ENCODE measurements at regions of chr6 and their contacts with region 1.

Region 1: GRCh38 chr6:159931112-159931511 is 37.8 kb upstream of the IGF2R start:
- DNase-seq: peak; percentile 69
- H3K4me3 Mint-ChIP-seq: no peak overlapping the region
- H3K27ac Mint-ChIP-seq: peak overlapping the region; percentile 92
- H3K4me1 Mint-ChIP-seq: peaks cover 37% of the 10 kb centered on the region
- H3K27me3 Mint-ChIP-seq: peaks cover 2% of the 10 kb centered on the region

Region 2: DNA sequence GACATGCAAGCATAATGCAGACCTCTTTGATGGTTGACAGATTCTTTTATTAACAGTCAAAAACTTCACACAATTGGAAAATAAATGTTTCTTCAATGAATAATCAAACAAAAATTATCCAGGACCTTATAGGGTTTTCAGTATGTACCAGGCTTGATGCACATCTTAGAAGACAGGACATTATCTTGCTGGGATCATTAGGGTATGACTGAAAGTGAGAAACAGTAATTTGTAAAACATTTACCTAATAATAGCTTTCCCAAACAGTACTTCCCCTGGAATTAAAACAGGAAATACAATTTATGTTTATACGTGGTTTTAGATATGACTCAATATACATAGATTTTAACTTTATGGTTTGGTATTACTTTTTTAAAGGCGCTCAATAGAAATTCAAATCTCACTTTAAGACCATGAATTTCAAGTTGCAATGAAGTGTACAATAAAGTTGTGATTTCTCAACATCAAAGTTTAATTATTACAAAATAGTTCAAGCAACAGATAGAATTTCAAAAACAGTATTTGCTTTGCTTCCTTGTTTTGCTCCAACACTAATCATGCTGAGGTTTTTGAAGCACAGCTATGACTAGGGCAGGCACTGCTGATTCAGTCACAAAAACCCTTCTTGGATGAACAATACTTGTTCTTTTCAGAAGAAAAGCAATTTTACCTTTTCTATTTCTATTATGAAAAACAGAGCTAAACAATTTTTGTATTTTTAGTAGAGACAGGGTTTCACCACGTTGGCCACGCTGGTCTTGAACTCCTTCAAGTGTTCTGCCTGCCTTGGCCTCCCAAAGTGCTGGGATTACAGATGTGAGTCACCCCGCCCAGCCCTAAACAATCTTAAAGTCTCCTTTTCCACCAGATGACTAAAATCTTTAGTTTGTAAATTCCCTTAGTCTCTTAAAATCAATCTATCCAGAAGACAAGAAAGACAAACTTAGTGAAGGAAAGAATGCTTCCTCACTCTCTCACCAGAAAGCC is 251.7 kb before region 1 on chr6:
- CTCF ChIA-PET with region 1: interaction called, 3 read pairs
- POLR2A ChIA-PET with region 1: interaction called, 3 read pairs
- intact Hi-C with region 1: loop called (anchors 1 kb)
- DNase-seq: peak; percentile 69
- H3K4me3 Mint-ChIP-seq: no peak overlapping the region
- H3K27ac Mint-ChIP-seq: peak overlapping the region; percentile 83
- H3K4me1 Mint-ChIP-seq: peaks cover 36% of the 10 kb centered on the region
- H3K27me3 Mint-ChIP-seq: no peaks in the 10 kb centered on the region

Region 3: DNA sequence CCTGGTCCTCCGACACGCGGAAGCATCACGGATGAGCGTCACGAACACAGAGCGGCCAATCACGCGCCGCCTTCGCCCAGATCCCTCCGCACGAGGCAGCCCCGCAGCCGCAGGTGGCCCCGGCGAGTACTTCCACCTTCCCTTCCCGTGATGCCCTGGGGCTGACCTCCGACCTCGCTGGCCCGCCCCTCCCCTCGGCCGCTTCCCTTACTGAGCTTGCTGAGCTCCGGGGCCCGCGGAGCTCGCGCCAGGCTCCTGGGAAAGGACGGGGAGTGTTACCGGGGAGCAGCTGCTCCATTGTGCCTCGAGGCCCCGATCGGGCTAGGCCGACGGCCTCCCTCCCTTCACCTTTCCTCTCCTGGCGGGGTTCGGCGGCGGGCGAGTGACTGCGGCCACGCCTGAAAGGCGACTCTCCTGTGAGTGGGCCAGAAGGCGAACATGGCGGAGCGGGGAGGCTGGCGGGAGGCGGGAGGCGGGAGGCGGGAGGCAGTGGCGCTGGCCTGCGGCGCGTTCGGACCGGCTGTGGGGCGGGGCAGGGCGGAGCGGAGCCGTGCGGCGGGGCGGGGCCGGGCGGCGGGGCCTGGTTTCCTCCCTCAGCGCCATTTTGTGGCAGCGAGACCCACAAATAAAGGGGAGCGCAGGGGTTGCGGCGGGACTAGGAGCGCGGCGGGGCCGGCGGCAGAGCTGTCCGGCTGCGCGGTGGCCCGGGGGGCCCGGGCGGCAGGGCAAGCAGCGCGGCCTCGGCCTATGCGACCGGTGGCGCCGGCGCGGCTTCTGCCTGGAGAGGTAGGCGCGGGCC is 204.0 kb before region 1 on chr6 and contains the start of gene WTAP:
- CTCF ChIA-PET with region 1: interaction called, 4 read pairs
- POLR2A ChIA-PET with region 1: interaction called, 7 read pairs
- intact Hi-C with region 1: loop called (anchors 1 kb)
- DNase-seq: peak; percentile 98
- H3K4me3 Mint-ChIP-seq: peak within 1 kb of the TSS; percentile 95
- H3K27ac Mint-ChIP-seq: peak within 1 kb of the TSS; percentile 98
- H3K4me1 Mint-ChIP-seq: peaks cover 47% of the 10 kb centered on the region
- H3K27me3 Mint-ChIP-seq: no peaks in the 10 kb centered on the region
- total RNA-seq, gene WTAP: 87.6 to 90.2 TPM

Region 4: GRCh38 chr6:159852877-159853276 is 78.2 kb before region 1 on chr6:
- CTCF ChIA-PET with region 1: no interaction called
- POLR2A ChIA-PET with region 1: no interaction called
- intact Hi-C with region 1: no loop called
- DNase-seq: no peak
- H3K4me3 Mint-ChIP-seq: no peak overlapping the region
- H3K27ac Mint-ChIP-seq: no peak overlapping the region
- H3K4me1 Mint-ChIP-seq: no peaks in the 10 kb centered on the region
- H3K27me3 Mint-ChIP-seq: peaks cover 11% of the 10 kb centered on the region

Region 5: GRCh38 chr6:159941286-159942113 is 10.4 kb after region 1 on chr6:
- CTCF ChIA-PET with region 1: interaction called, 3 read pairs
- POLR2A ChIA-PET with region 1: no interaction called
- intact Hi-C with region 1: loop called (anchors 1 kb)
- DNase-seq: peak; percentile 49
- H3K4me3 Mint-ChIP-seq: no peak overlapping the region
- H3K27ac Mint-ChIP-seq: no peak overlapping the region
- H3K4me1 Mint-ChIP-seq: peaks cover 3% of the 10 kb centered on the region
- H3K27me3 Mint-ChIP-seq: peaks cover 8% of the 10 kb centered on the region

Region 6: DNA sequence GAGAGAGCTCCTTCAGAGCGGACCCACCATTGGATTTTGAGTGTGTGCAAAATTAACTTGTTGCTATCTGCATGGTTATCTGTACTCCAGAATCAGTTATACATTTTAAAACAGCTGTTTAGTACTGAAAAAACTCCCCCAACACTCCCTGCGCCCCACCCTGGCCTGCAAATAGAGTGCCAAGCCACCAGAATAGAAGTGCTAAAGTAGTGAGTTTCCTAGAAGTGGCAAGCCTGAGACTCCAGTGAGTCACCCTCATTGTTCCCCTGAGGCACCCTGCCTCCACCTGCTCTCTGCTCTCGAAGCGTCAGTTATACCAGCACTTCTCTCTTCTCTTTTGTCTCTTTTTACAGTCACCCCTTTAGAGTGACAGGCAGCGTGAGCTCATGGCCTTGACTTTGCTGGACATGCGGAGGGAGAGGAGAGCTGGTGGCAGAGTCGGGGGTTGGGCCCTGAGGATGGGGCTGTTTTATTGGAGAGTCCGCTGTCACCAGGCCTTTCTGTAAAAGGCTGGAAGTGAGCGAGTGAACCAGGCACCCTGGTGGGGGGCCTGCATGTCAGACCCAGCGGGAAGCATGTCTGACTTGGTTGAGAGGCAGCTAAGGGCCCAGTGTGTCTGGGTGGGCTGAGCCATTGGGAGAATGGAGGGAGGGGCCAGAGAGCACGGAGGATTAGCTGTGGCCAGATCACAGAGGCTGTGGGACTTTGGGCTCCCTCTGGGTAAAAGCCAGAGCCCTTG is 48.2 kb after region 1 on chr6:
- CTCF ChIA-PET with region 1: interaction called, 4 read pairs
- POLR2A ChIA-PET with region 1: interaction called, 7 read pairs
- intact Hi-C with region 1: loop called (anchors 1 kb)
- DNase-seq: peak; percentile 82
- H3K4me3 Mint-ChIP-seq: peak overlapping the region; percentile 73
- H3K27ac Mint-ChIP-seq: peak overlapping the region; percentile 98
- H3K4me1 Mint-ChIP-seq: peaks cover 95% of the 10 kb centered on the region
- H3K27me3 Mint-ChIP-seq: no peaks in the 10 kb centered on the region

Region 7: DNA sequence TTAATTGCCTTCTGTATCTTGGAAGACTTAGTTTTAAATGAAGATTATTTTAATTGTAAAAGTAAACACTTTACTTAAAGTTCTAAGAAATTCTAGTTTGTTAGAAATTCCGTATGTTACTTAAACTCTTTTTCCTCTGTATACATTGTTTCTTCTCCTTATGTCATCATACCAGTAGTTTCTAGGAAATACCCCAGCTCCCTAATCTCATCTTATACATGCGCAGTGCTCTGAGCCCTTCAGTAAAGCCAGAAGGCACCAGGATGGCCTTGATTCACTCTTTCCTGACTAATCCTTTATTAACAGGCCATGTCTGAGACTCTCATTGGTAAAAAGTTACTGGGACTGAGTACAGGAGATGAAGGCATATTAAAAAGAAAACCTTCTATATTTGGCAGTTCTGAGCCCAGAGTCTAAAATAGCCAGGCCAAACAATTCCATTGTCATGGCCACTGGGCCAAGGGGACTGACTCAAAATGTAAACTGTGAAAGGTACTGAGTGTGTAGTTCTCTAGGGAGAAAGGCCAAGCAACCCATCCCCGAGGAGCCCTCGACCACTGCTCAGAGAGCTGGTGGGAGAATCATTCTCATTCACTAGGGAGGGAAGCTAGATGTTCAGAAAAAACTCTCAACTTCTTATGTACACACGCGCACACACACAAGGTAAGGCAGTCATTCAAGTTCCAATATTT is 215.5 kb after region 1 on chr6:
- CTCF ChIA-PET with region 1: no interaction called
- POLR2A ChIA-PET with region 1: no interaction called
- intact Hi-C with region 1: no loop called
- DNase-seq: no peak
- H3K4me3 Mint-ChIP-seq: no peak overlapping the region
- H3K27ac Mint-ChIP-seq: no peak overlapping the region
- H3K4me1 Mint-ChIP-seq: no peaks in the 10 kb centered on the region
- H3K27me3 Mint-ChIP-seq: no peaks in the 10 kb centered on the region

Region 8: GRCh38 chr6:160221423-160221822 is 290.3 kb after region 1 on chr6:
- CTCF ChIA-PET with region 1: no interaction called
- POLR2A ChIA-PET with region 1: no interaction called
- intact Hi-C with region 1: loop called (anchors 1 kb)
- DNase-seq: no peak
- H3K4me3 Mint-ChIP-seq: no peak overlapping the region
- H3K27ac Mint-ChIP-seq: no peak overlapping the region
- H3K4me1 Mint-ChIP-seq: peaks cover 10% of the 10 kb centered on the region
- H3K27me3 Mint-ChIP-seq: peaks cover 18% of the 10 kb centered on the region

Region 9: DNA sequence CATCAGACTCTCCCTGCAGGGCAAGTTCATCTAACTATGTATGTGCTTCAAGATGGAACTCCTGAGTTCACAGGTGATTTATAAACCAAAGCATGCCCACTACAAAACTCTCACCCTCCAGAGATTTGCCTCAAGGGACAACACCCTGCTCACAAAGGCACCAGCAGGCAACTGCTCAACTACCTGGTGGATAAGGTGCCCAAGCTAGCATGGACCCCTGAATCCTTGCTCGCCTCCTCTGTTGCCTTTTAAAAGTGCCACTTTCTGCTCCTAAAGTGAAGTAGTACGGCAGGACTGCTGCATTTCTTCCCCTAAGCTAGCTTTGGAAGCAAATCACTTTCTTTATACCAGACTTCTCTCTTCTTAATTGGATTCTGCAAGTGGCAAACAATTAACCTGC is 731.7 kb after region 1 on chr6:
- CTCF ChIA-PET with region 1: no interaction called
- POLR2A ChIA-PET with region 1: no interaction called
- intact Hi-C with region 1: no loop called
- DNase-seq: no peak
- H3K4me3 Mint-ChIP-seq: no peak overlapping the region
- H3K27ac Mint-ChIP-seq: no peak overlapping the region
- H3K4me1 Mint-ChIP-seq: no peaks in the 10 kb centered on the region
- H3K27me3 Mint-ChIP-seq: peaks cover 11% of the 10 kb centered on the region

Measured in activated CD4-positive, alpha-beta memory T cell treated with anti-CD3 and anti-CD28 coated beads for 36 hours (primary cell).